ENCODE measurements at regions of chr3 and their contacts with region 1.

Region 1: GRCh38 chr3:107271787-107272387 is 105.4 kb upstream of the CCDC54 start:
- DNase-seq: no peak
- ATAC-seq: no peak
- H3K4me3 ChIP-seq: no peak overlapping the region
- H3K27ac ChIP-seq: no peak overlapping the region
- H3K4me1 ChIP-seq: no peaks in the 10 kb centered on the region
- H3K27me3 ChIP-seq: no peaks in the 10 kb centered on the region

Region 2: DNA sequence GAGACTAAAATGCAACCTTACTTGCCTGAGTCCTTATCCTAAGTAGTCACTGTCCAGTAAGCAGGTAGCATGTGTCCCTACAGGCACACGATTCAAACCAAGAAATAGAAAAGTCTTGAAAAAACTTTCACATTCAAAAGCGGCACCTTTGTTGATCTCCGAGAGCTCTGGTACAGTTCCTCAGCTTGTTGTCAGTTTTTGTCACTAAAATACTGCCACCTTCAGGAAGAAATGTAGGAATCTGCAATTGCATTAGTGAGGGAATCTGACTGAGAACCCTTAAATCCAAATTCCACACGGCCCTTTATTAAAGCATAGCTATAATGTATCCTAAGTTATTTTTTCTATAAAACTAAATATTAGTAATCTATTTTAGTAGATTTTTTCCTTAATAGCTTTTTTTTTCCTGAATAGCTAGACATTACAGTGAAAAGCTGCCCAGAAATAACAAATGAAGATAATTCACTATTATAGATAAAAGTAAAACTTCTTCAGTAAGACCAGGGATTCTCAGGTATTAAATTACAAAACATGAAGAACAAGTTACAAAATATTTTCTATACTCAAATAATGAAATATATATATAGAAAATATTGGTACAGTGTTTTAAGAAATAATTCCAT is 149.4 kb after region 1 on chr3:
- intact Hi-C with region 1: loop called (anchors 5 kb)
- DNase-seq: no peak
- ATAC-seq: peak; percentile 69
- H3K4me3 ChIP-seq: peak overlapping the region; percentile 20 to 54
- H3K27ac ChIP-seq: no peak overlapping the region
- H3K4me1 ChIP-seq: no peaks in the 10 kb centered on the region
- H3K27me3 ChIP-seq: no peaks in the 10 kb centered on the region

Region 3: GRCh38 chr3:107531917-107532469 is 260.1 kb after region 1 on chr3:
- intact Hi-C with region 1: loop called in 1 of 2 experiments (anchors 10 kb)
- DNase-seq: no peak
- ATAC-seq: no peak
- H3K4me3 ChIP-seq: no peak overlapping the region
- H3K27ac ChIP-seq: no peak overlapping the region
- H3K4me1 ChIP-seq: no peaks in the 10 kb centered on the region
- H3K27me3 ChIP-seq: no peaks in the 10 kb centered on the region